Panc1 (cell line): ENCODE measurements at regions of chr16 and their contacts with region 1.

Region 1: GRCh38 chr16:56075732-56076388 is 115.4 kb upstream of the GNAO1 start:
- DNase-seq: no peak
- ATAC-seq: no peak
- H3K4me3 ChIP-seq: no peak overlapping the region
- H3K27ac ChIP-seq: no peak overlapping the region
- H3K4me1 ChIP-seq: no peaks in the 10 kb centered on the region
- H3K27me3 ChIP-seq: no peaks in the 10 kb centered on the region
- CTCF ChIP-seq: no peak

Region 2: GRCh38 chr16:56013962-56014552 is 61.8 kb before region 1 on chr16:
- CTCF ChIA-PET with region 1: no interaction called
- POLR2A ChIA-PET with region 1: interaction called, 26 read pairs
- in situ Hi-C with region 1: no loop called
- intact Hi-C with region 1: no loop called
- DNase-seq: no peak
- ATAC-seq: no peak
- H3K4me3 ChIP-seq: no peak overlapping the region
- H3K27ac ChIP-seq: no peak overlapping the region
- H3K4me1 ChIP-seq: no peaks in the 10 kb centered on the region
- H3K27me3 ChIP-seq: no peaks in the 10 kb centered on the region; the same call in none of the 2 replicates
- CTCF ChIP-seq: no peak

Region 3: DNA sequence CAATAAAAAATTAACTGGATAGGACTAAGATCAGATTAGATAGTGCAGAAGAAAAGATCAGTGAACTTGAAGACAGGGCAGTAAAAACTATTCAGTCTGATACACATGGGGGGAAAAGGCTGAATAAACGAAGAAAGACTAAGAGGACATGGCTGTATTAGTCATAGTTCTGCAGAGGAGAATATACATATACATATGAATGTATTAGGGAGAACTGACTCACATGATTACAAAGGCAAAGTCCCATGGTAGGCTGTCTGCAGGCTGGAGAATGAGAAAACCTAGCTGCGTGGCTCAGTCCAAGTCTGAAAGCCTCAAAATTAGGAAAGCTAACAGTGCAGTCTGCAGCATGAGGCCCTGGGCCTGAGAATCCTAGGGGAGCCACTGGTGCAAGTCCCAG is 17.2 kb after region 1 on chr16:
- CTCF ChIA-PET with region 1: no interaction called
- POLR2A ChIA-PET with region 1: interaction called, 11 read pairs
- in situ Hi-C with region 1: no loop called
- intact Hi-C with region 1: no loop called
- DNase-seq: no peak
- ATAC-seq: no peak
- H3K4me3 ChIP-seq: no peak overlapping the region
- H3K27ac ChIP-seq: no peak overlapping the region
- H3K4me1 ChIP-seq: no peaks in the 10 kb centered on the region
- H3K27me3 ChIP-seq: no peaks in the 10 kb centered on the region
- CTCF ChIP-seq: no peak